HCT116 (cell line): ENCODE measurements at regions of chr17 and their contacts with region 1.

Region 1: GRCh38 chr17:29931231-29931932 is 1.4 kb upstream of the SSH2 start:
- DNase-seq: peak; percentile 82
- ATAC-seq: peak; percentile 61
- H3K4me3 ChIP-seq: peak overlapping the region; percentile 74 to 92
- H3K27ac ChIP-seq: no peak overlapping the region; the same call in 1 of the 2 replicates
- H3K4me1 ChIP-seq: peaks cover 13 to 23% of the 10 kb centered on the region in 2 experiments
- H3K27me3 ChIP-seq: no peaks in the 10 kb centered on the region
- CTCF ChIP-seq: peak; percentile 91 to 97 (median 92)
- POLR2A ChIP-seq: no peak
- RAD21 ChIP-seq: peak; percentile 93

Region 2: DNA sequence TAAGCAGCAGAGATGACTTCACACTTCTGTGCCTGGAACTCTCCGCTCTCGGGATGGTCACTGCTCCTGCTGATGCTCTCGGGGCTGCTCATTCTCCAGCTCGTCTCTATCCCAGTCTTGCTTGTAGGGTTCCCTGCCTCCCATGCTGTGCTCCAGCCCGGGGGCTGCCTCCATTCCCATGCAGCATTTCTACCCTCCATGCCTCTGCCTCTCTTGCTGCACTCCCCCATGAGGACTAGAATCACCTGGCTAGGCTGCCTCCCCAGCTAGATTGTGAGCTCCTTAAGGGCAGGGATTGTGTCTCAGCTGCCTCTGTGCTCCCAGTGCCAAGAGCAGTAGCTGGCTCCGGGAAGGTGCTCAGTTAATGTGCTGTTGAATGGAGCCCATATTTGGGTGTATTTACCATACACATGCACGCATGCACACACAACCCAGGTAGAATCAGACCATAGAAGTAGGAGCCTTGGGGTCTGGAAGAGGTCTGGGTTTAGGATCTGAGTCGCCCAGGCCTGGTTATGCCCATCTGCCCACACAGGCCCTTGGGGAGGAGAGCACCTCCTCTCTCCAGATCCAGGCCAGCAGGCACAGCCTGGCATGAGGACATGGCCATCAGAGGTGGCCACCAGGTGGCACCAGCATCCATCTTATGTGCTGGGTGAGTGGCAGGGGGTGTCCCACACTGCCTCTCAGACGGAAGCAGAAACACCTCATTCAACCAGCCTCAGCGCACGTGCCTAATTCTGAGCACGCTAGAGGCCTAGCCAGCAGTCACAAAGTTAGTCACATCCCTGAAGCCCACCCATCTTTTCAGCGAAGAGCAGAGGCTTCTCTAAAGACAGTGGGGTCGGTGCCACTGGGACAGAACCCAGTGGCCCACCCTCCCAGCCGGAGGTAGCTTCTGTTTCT is 351.3 kb before region 1 on chr17:
- CTCF ChIA-PET with region 1: no interaction called
- POLR2A ChIA-PET with region 1: no interaction called
- RAD21 ChIA-PET with region 1: interaction called in 1 of 2 experiments, 4 read pairs
- intact Hi-C with region 1: loop called (anchors 1 kb)
- DNase-seq: peak; percentile 67
- ATAC-seq: peak; percentile 97
- H3K4me3 ChIP-seq: no peak overlapping the region
- H3K27ac ChIP-seq: peak overlapping the region; percentile 37
- H3K4me1 ChIP-seq: peaks cover 5 to 26% of the 10 kb centered on the region in 2 experiments; a peak in 3 of 4 replicates
- H3K27me3 ChIP-seq: no peaks in the 10 kb centered on the region
- CTCF ChIP-seq: peak; percentile 88
- POLR2A ChIP-seq: no peak
- RAD21 ChIP-seq: peak; percentile 95

Region 3: DNA sequence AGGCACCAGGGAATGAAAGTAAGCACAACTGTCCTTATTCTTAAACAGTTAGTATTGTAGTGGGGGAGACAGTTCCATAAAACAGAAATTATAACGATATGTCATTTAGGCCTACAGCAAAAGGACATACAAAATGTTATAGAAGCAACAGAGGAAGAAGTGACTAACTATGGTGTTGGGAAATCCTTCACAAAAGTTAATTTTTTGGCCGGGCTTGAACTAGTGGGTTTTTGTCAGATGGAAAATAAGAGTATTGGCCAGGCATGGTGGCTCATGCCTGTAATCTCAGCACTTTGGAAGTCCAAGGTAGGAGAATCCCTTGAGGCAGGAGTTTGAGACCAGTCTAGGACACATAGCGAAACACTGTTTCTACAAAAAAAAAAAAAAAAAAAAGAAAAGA is 129.1 kb before region 1 on chr17:
- CTCF ChIA-PET with region 1: interaction called, 106 read pairs
- POLR2A ChIA-PET with region 1: interaction called, 5 read pairs
- RAD21 ChIA-PET with region 1: interaction called, 10 to 13 read pairs
- intact Hi-C with region 1: loop called (anchors 1 kb)
- DNase-seq: no peak
- ATAC-seq: no peak
- H3K4me3 ChIP-seq: no peak overlapping the region
- H3K27ac ChIP-seq: no peak overlapping the region
- H3K4me1 ChIP-seq: no peaks in the 10 kb centered on the region
- H3K27me3 ChIP-seq: no peaks in the 10 kb centered on the region
- CTCF ChIP-seq: no peak
- POLR2A ChIP-seq: no peak
- RAD21 ChIP-seq: no peak

Region 4: DNA sequence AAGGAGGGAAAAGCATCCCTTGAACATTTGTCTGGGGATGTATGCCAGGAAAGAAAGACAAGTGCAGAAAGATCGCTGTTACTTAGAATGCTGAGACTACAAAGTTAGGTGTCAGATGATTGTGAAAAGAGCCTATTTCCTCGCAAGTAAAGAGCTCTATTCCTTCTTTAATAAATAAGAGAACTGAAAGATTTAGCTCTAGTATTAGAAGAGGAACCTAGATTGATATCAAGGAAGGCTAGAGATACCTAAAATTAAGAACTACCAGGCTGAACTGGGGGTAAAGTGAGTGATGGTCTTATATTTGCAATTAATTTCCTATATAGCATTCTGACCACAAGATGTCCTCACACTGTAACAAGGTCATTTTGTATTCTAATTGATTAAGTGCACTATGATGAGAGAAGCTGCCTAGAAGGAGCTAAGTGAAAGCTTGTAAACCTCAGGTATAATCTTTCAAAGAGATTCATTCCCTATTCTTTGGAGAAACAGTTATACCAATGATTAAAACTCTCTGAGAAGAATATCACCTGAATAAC is 63.7 kb before region 1 on chr17:
- CTCF ChIA-PET with region 1: interaction called, 23 read pairs
- POLR2A ChIA-PET with region 1: no interaction called
- RAD21 ChIA-PET with region 1: interaction called, 6 read pairs
- intact Hi-C with region 1: loop called (anchors 1 kb)
- DNase-seq: no peak
- ATAC-seq: no peak
- H3K4me3 ChIP-seq: no peak overlapping the region
- H3K27ac ChIP-seq: no peak overlapping the region
- H3K4me1 ChIP-seq: no peaks in the 10 kb centered on the region
- H3K27me3 ChIP-seq: no peaks in the 10 kb centered on the region
- CTCF ChIP-seq: peak in 2 of 3 experiments; percentile 26 to 46; a peak in 2 of 6 replicates
- POLR2A ChIP-seq: no peak
- RAD21 ChIP-seq: peak; percentile 27; the same call in 1 of the 2 replicates

Region 5: DNA sequence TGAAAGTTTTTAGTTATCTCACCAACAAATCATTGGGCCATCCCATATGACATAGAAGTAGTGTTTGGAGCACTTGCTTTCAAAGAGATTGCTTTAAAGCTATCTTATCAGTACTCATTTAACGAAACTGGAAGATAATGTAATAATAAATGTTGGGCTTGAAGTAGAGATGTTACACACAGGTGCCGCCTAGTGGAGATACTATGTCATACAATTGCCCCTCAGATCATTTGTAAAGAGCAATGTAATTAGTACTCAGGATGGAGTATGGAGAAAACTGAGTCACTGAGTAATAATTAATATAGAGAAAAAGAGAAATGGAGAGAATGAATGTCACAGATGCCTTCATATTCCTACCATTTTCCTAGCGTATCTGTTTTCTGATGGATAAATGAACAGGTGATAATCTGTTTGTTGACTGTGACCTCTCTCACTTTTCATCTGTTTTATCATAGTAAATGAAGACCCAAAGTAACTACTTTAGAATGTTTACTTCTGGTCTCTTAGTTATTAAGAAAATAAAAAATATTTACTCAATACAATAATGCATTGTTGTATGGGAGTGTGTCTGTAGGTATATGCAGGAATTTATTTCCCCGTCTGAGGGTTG is 90.4 kb after region 1 on chr17:
- CTCF ChIA-PET with region 1: interaction called, 18 read pairs
- POLR2A ChIA-PET with region 1: no interaction called
- RAD21 ChIA-PET with region 1: no interaction called
- intact Hi-C with region 1: loop called (anchors 5 kb)
- DNase-seq: peak; percentile 37
- ATAC-seq: peak; percentile 80
- H3K4me3 ChIP-seq: no peak overlapping the region
- H3K27ac ChIP-seq: no peak overlapping the region
- H3K4me1 ChIP-seq: no peaks in the 10 kb centered on the region
- H3K27me3 ChIP-seq: no peaks in the 10 kb centered on the region
- CTCF ChIP-seq: peak; percentile 72 to 85 (median 80); a peak in 5 of 6 replicates
- POLR2A ChIP-seq: no peak
- RAD21 ChIP-seq: peak; percentile 70

Region 6: DNA sequence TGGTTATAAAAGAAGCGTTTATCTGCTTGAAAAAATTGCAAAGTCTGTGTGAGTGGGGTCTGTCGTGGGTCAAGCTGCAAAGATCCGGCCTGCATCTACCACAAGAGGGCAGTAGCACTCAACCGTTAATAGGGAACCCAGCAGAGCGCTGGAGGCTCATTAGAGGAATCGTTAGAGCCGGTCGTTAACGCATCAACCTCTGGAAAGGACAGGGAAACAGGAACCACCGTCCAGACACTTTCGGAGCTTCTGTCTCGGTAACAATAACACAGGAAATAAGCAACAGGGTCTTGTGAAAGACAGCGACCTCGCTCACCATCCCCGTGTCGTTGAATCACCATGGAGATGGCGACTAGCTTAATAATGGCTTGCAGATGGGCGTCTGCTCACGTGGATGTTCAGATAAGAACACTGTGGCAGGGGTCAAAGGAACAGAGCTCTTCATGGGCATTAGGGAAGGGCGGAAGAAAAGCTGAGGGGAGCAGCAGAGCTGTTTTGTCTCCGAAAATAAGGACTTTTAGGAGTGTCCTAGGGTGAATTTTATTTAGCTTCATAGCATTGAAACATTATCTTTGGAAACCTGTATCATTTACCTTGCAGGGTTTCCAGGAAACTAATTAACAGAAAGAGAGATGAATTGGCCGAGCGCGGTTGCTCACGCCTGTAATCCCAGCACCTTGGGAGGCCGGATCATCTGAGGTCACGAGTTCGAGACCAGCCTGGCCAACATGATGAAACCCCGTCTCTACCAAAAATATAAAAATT is 173.4 kb after region 1 on chr17:
- CTCF ChIA-PET with region 1: interaction called, 11 read pairs
- POLR2A ChIA-PET with region 1: no interaction called
- RAD21 ChIA-PET with region 1: no interaction called
- intact Hi-C with region 1: no loop called
- DNase-seq: peak; percentile 76
- ATAC-seq: peak; percentile 99
- H3K4me3 ChIP-seq: peak overlapping the region; percentile 47 to 57
- H3K27ac ChIP-seq: no peak overlapping the region
- H3K4me1 ChIP-seq: peaks cover 3 to 7% of the 10 kb centered on the region in 2 experiments; a peak in 2 of 4 replicates
- H3K27me3 ChIP-seq: no peaks in the 10 kb centered on the region
- CTCF ChIP-seq: peak; percentile 88 to 96 (median 93); a peak in 5 of 6 replicates
- POLR2A ChIP-seq: no peak
- RAD21 ChIP-seq: peak; percentile 90